ENCODE measurements at regions of chr17 and their contacts with region 1.

Region 1: DNA sequence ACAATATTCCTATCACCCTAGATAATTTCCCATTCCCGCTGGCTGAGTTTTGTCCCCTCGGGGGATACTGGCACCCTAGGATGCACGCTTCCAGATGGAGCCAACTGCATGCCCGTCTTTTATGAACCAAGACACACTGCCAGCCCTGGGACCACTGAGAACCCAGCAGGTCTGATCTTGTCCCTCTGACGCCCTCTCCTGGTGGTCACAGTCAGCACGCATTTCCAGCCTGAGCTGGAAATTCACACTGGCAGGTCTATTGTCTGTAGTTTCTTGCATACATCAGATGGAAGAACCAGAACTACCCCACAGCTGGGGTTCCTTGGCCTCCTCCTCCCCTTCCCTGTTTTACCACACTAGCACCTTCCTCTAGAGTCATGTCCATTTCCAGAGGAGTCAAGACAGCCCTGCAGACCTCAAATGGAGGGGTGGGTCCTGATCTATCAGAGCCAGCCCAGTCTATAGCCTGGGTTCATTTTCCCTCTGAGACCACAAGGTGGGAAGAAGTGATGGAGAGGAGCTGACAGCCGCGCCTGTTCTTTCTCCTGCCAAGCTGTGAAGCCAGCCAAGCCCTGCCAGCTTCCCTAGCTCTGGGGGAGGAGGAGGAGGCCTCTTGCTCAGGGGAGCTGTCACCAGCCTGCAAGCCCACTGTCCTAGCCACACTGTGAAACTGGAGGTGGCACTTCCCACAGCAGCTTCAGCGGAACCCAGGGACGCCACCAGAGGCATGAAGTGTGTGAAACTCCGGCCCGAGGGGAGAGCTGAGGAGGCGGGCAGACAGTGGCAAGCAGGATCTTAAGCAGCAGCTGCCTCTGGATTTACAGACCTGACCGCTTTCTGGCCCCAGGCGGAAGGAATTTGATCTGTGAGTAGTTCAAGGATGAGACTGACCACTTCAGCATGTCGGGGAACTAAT is 29.3 kb downstream of the MXRA7 start:
- DNase-seq: peak; percentile 59

Region 2: DNA sequence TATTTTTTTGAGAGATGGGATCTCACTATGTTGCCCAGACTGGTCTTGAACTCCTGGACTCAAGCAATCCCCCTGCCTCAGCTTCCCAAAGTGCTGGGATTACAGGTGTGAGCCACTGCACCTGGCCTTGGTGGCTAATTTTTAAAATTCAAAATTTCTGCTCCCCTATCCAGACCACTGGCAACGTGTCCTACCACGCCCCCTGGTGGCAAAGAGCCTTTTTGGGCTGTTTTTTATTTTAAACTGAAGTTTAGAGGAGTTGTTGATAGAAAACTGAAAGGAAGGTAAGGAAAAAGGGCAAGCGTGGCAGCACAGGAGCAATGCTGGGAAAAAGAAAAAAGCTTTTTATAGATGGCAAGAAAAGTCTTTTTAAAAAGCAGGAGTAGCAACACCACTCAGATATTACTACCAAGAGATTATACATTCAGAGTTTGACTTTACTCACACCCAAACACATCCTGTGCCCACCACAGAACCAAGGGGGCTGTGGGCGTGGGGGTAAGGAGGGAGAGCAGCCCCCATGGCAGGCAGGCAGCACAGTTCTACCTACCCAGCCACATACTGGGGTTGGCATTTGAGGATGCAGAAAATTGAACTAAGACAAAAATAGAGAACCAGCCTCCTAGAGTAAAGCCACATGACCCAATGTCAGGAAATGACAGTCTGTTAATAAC is 33.5 kb after region 1 on chr17:
- intact Hi-C with region 1: loop called in 1 of 2 experiments (anchors 5 kb)
- DNase-seq: peak; percentile 89